SK-N-SH (cell line): ENCODE measurements at regions of chr22 and their contacts with region 1.

Region 1: DNA sequence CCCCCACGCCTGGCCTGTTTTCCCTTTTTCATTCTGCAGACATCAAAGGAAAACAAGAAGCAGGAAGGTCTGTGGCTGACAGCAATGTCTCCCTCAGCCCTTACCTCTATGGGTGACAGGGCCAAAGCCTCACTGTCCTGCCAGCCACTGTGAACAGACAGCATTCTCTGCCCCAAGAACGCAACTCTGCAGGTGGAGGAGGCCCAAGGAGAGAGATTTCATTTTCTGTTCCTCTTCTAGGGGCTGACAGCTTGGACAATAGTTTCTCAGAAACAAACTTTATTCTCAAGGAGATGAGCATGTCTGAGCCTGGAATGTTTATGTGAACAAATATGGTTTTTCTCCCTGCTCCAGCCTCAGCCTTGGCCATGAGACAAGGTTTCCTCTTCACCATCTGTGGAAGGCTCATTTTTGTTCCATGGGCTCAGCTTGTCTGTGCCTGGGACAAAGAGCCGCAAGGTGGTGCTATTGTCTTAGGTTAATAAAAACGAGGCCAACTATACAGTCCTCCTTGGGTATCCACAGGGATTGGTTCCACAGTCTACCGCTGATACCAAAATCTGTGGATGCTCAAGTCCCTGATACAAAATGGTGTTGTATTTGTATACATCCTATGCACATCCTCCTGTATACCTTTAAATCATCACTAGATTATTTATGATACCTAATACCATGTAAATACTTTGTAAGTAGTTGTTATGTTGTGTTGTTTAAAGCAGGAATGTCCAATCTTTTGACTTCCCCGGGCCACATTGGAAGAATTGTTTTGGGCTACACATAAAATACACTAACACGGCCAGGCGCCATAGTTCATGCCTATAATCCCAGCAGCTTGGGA is 5.8 kb downstream of the PIWIL3 start:
- DNase-seq: peak; percentile 85
- H3K4me3 ChIP-seq: no peak overlapping the region; a peak in 1 of 4 replicates
- H3K27ac ChIP-seq: no peak overlapping the region
- H3K4me1 ChIP-seq: no peaks in the 10 kb centered on the region
- H3K27me3 ChIP-seq: no peaks in the 10 kb centered on the region; the same call in 1 of the 2 replicates
- CTCF ChIP-seq: peak; percentile 78
- EP300 ChIP-seq: no peak
- RAD21 ChIP-seq: peak; percentile 94

Region 2: DNA sequence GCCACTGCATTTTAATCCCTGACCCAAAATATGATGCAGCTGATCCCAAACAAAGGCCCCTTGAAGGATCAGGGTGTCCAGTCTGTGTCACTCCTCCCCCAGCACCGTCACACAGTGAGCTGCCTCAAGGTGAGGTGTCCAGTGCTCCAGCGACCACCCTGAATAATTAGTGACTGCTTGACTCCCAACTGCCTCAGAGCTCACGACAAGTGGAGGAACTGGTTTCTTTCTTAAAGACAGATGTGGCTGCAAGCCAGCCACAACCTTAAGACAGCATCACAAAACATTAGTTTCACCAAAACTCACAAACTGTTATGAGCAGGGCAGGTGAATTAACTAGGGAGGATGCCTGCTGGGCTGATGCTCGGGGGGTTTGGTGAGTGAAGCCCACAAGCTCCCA is 68.9 kb before region 1 on chr22:
- CTCF ChIA-PET with region 1: interaction called, 10 read pairs
- POLR2A ChIA-PET with region 1: no interaction called
- DNase-seq: no peak
- H3K4me3 ChIP-seq: no peak overlapping the region
- H3K27ac ChIP-seq: no peak overlapping the region
- H3K4me1 ChIP-seq: peaks cover 0 to 7% of the 10 kb centered on the region in 2 experiments; a peak in 1 of 4 replicates
- H3K27me3 ChIP-seq: peaks cover 4% of the 10 kb centered on the region
- CTCF ChIP-seq: no peak
- EP300 ChIP-seq: no peak
- RAD21 ChIP-seq: no peak

Region 3: DNA sequence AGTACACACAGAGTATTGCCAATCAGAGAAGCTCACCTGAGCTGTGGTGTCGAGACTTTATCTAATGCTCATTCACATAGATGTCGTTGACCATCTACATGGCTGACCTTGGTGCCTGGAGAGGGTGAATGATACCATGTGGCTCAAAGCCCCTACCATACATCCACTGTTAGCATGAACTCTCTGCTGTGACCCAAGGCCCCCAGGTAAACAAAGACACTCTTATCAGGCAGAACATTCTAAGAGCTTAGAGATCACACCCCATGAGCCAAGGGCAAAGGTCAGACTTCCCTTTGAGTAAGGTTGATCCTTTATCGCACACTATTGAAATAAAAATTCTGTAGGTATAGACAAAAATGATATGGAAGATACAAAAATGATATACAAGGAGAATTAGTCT is 20.8 kb after region 1 on chr22:
- CTCF ChIA-PET with region 1: interaction called, 16 read pairs
- POLR2A ChIA-PET with region 1: no interaction called
- DNase-seq: no peak
- H3K4me3 ChIP-seq: no peak overlapping the region
- H3K27ac ChIP-seq: no peak overlapping the region
- H3K4me1 ChIP-seq: no peaks in the 10 kb centered on the region; a peak in 1 of 4 replicates
- H3K27me3 ChIP-seq: no peaks in the 10 kb centered on the region
- CTCF ChIP-seq: no peak
- EP300 ChIP-seq: no peak
- RAD21 ChIP-seq: no peak

Region 4: GRCh38 chr22:24834845-24835570 is 66.3 kb after region 1 on chr22:
- CTCF ChIA-PET with region 1: interaction called, 25 read pairs
- POLR2A ChIA-PET with region 1: no interaction called
- DNase-seq: peak; percentile 64
- H3K4me3 ChIP-seq: no peak overlapping the region
- H3K27ac ChIP-seq: no peak overlapping the region
- H3K4me1 ChIP-seq: peaks cover 0 to 12% of the 10 kb centered on the region in 2 experiments; a peak in 1 of 4 replicates
- H3K27me3 ChIP-seq: no peaks in the 10 kb centered on the region
- CTCF ChIP-seq: peak; percentile 34
- EP300 ChIP-seq: no peak
- RAD21 ChIP-seq: peak; percentile 73

Region 5: DNA sequence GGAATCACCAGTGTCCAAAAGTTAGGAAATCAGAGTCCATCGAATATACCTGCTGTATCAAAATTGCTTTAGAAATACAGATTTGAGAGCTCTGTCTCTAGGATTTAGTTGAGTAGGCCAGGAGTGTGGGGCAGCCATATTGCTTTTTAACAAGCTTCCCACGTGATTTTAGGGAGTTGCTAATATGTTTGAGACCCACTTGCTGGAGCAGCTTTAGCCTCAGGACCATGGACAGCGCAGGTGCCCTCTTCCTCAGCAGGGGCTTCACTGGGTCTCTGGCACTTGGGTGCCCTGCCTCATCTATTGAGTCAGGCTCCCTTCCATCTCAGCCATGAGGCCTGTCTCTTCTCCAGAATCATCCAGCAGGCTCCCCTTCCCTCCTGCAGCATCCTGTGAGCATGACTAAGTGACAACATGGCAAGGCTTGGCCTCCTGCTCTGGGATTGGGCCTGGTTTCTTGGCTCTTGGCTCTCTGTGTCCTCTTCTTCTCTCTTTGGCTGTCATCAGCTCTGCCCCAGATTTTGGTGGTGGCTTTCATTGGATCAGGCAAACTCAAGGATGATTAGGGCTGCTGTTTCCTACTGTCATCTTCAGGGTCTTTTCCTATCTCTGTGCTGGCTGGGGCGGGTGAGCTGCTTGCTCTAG is 107.2 kb after region 1 on chr22:
- CTCF ChIA-PET with region 1: interaction called, 10 read pairs
- POLR2A ChIA-PET with region 1: no interaction called
- DNase-seq: no peak
- H3K4me3 ChIP-seq: no peak overlapping the region
- H3K27ac ChIP-seq: no peak overlapping the region
- H3K4me1 ChIP-seq: no peaks in the 10 kb centered on the region
- H3K27me3 ChIP-seq: no peaks in the 10 kb centered on the region
- CTCF ChIP-seq: no peak
- EP300 ChIP-seq: no peak
- RAD21 ChIP-seq: no peak

Region 6: DNA sequence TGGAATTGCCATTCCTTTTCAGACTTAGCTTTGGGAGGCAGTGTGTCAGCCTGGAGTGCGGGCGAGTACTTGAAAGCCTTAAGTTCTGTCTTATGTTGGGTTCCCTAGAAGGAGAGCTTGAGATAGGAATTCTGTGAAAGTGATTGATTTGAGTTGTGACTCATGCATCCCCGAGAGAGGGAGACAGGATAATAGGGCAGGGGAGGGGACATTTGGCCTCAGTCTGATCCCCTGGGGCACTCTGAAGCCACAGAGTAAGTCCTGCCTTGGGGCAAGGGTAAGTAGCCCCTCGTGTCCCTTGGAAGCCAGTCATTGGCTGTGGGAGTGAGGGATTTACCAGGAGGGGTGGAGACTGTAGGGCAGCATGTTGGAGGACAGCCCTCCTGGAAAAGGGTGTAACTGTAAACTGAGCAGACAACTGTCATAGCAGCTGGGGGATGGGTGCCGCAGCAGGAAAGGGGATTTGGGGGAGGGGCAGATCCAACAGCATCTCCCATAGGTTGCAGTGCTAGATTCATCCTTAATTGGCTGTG is 227.7 kb after region 1 on chr22:
- CTCF ChIA-PET with region 1: no interaction called
- POLR2A ChIA-PET with region 1: no interaction called
- DNase-seq: peak; percentile 44
- H3K4me3 ChIP-seq: no peak overlapping the region
- H3K27ac ChIP-seq: peak overlapping the region; percentile 16 to 30; a peak in 2 of 4 replicates
- H3K4me1 ChIP-seq: peaks cover 16 to 19% of the 10 kb centered on the region in 2 experiments; a peak in 3 of 4 replicates
- H3K27me3 ChIP-seq: no peaks in the 10 kb centered on the region
- CTCF ChIP-seq: no peak
- EP300 ChIP-seq: no peak
- RAD21 ChIP-seq: no peak

Region 7: DNA sequence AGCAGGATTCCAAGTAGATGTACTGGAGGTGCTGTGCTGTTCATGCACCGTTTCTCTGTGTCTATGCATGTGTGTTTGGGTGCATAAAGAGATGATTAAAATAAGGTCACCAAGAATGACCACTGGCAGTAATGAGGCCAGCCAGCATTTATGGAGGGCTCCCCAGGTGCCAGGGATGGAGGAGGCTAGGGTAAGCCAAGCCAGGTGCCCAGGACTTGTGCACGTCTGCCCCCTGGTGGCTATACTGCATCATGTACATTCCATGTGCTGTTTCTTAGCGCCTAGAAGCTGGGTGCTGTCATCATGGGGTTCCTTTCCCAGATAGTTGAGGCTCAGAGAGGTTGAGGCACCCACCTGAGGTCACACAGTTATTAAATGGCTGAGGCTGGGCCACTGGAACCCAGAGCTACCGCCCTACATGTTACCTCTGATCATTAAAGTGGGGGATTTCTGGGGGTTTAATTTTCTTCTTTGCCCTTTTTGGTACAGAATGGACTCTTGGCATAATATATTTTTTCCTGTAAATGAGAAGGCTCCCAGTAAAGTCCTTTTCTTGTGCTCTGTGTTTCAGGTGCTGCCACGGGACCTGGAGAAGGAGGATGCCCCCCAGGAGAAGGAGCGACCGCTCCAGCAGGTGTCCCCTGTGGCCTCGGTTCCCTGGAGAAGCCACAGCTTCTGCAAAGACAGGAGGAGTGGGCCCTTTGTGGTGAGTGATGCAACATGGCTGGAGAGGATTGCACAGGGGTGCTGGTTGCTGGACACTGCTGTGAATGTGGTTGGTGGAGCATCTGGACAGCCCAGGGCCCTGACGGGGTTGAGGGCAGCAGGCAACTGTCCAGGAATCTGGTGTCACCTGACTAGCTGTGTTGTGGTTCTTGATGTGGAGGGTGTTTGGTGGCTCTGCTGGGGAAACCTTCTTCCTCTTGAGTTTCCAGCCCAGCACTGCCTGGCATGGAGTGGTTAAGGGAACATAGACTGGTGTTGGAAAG is 280.2 kb after region 1 on chr22:
- CTCF ChIA-PET with region 1: interaction called, 33 read pairs
- POLR2A ChIA-PET with region 1: no interaction called
- DNase-seq: peak; percentile 84
- H3K4me3 ChIP-seq: no peak overlapping the region; a peak in 1 of 4 replicates
- H3K27ac ChIP-seq: peak overlapping the region in 1 of 2 experiments; percentile 17; a peak in 1 of 4 replicates
- H3K4me1 ChIP-seq: peaks cover 0 to 23% of the 10 kb centered on the region in 2 experiments; a peak in 1 of 4 replicates
- H3K27me3 ChIP-seq: no peaks in the 10 kb centered on the region
- CTCF ChIP-seq: peak; percentile 90
- EP300 ChIP-seq: no peak
- RAD21 ChIP-seq: peak; percentile 92